CD4-positive, alpha-beta T cell (primary cell): ENCODE measurements at regions of chr3 and their contacts with region 1.

Region 1: DNA sequence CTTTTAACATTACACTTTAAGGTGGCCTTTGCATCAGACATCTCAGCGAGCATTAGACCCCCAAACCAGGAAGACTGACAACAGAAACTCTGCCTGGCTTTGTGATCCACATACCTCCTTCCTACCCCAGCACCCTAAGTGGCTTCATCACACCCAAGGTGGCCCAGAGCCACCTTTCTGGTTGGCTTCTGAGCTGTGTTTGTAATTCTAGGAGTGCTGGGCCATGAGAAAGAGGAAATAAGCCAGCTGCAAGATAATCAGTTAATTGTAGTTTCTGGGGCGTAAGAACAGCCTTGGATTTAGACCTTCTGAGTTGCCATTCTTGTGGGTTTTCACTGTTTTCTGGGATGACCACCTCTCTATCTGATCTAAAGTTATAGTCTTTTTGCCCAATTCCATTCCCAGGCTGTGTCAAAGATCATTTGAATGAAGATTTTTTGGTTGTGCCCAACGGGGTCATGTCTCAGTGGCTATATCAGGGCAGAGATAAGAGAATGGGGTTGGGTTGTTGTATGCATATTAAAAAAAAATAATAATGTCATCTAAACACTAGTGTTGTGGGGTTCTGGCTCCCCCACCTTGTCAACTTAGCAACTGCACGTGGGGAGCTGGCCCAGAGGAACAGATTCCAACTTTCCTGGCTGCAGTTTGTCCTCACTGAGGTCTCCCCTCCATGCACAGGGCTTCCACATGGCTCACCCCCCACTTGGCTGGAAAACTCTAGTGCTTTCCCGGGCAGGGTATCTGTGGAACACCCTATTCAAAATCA is 234.8 kb upstream of the WNT5A start:
- DNase-seq: peak in 1 of 14 experiments; percentile 8
- ATAC-seq: no peak
- H3K4me3 ChIP-seq: no peak overlapping the region
- H3K4me3 Mint-ChIP-seq: no peak overlapping the region
- H3K27ac ChIP-seq: no peak overlapping the region
- H3K27ac Mint-ChIP-seq: no peak overlapping the region
- H3K4me1 ChIP-seq: no peaks in the 10 kb centered on the region
- H3K4me1 Mint-ChIP-seq: no peaks in the 10 kb centered on the region
- H3K27me3 ChIP-seq: no peaks in the 10 kb centered on the region
- H3K27me3 Mint-ChIP-seq: peaks cover 20% of the 10 kb centered on the region
- CTCF ChIP-seq: no peak

Region 2: GRCh38 chr3:55485211-55485791 is 236.6 kb before region 1 on chr3:
- CTCF ChIA-PET with region 1: no interaction called
- POLR2A ChIA-PET with region 1: no interaction called
- intact Hi-C with region 1: loop called in 1 of 2 experiments (anchors 10 kb)
- DNase-seq: peak in 3 of 14 experiments; percentile 28 to 52 (median 40)
- ATAC-seq: no peak
- H3K4me3 ChIP-seq: no peak overlapping the region
- H3K4me3 Mint-ChIP-seq: peak overlapping the region; percentile 38
- H3K27ac ChIP-seq: no peak overlapping the region
- H3K27ac Mint-ChIP-seq: no peak overlapping the region
- H3K4me1 ChIP-seq: no peaks in the 10 kb centered on the region
- H3K4me1 Mint-ChIP-seq: peaks cover 13% of the 10 kb centered on the region
- H3K27me3 ChIP-seq: peaks cover 73 to 90% of the 10 kb centered on the region in 2 experiments
- H3K27me3 Mint-ChIP-seq: peaks cover 76% of the 10 kb centered on the region
- CTCF ChIP-seq: no peak